Heart left ventricle (tissue), 16 donors: ENCODE measurements at regions of chr6 and their contacts with region 1.

Region 1: DNA sequence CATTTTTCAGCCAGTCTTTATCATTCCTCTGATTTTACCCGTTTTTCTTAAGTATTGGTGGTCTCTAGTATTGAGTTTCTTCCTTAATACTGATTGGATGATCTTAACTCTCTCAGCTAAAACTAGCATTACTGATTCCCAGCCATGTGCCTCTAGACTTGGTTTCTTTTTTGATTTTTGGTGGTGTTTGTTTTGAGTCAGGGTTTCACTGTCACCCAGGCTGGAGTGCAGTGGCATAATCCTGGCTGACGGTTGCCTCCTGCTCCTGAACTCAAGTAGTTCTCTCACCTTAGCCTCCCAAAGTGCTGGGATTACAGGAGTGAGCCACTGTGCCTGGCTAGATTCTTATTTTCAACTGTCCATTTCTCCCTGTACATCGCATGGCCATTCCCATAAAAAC is 24.9 kb downstream of the DPPA5 start:
- DNase-seq: no peak
- ATAC-seq: no peak
- H3K4me3 ChIP-seq: no peak overlapping the region
- H3K27ac ChIP-seq: no peak overlapping the region
- H3K4me1 ChIP-seq: no peaks in the 10 kb centered on the region
- H3K27me3 ChIP-seq: peaks cover 0 to 22% (median 0%) of the 10 kb centered on the region in 9 donors
- CTCF ChIP-seq: no peak
- POLR2A ChIP-seq: no peak

Region 2: DNA sequence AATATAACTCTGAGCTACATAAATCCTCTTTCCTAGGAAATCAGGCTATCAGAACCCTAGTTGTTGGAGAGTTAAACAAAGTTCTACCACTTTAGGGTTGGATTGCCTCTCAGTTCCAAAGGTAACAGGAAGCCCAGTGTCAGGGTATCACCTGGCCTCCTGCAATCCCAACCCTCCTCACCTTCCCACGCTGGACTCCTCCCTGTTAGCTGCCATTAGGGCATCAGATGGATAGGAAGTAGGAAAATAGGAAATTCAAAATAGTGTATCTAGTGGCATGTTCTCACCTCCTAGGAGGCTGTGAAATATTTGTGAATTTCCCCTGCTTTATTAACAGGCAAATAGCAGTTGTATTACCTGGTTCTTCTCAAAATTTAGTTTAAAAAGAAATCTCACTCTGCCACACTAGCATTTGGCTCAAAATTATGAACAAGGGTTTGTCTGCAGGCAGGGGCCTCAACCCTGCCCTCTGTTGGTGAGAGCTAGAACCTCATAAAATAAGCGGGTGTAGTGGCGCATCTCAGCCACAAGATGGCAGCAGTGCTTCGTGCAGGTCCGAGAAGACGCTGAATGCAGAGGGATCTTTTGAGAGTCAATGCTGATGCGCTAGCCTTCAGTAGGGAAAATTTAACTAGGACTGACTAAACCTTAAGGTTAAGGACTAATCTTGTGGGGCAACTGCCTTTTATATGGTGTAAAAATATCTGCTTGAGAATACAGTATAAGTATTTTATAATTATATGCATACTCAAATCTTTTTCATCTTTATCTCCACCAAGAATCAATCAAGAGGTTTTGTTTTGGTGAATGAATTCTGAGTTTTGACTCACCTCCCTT is 917.1 kb before region 1 on chr6:
- intact Hi-C with region 1: loop called in 4 of 10 experiments (anchors 5 to 10 kb)
- DNase-seq: peak; percentile 37 to 73 (median 59)
- ATAC-seq: peak in 3 of 4 donors; percentile 68 to 87 (median 80)
- H3K4me3 ChIP-seq: no peak overlapping the region
- H3K27ac ChIP-seq: no peak overlapping the region
- H3K4me1 ChIP-seq: no peaks in the 10 kb centered on the region
- H3K27me3 ChIP-seq: peaks cover 0 to 21% (median 6%) of the 10 kb centered on the region in 9 donors
- CTCF ChIP-seq: peak; percentile 100
- POLR2A ChIP-seq: no peak

Region 3: DNA sequence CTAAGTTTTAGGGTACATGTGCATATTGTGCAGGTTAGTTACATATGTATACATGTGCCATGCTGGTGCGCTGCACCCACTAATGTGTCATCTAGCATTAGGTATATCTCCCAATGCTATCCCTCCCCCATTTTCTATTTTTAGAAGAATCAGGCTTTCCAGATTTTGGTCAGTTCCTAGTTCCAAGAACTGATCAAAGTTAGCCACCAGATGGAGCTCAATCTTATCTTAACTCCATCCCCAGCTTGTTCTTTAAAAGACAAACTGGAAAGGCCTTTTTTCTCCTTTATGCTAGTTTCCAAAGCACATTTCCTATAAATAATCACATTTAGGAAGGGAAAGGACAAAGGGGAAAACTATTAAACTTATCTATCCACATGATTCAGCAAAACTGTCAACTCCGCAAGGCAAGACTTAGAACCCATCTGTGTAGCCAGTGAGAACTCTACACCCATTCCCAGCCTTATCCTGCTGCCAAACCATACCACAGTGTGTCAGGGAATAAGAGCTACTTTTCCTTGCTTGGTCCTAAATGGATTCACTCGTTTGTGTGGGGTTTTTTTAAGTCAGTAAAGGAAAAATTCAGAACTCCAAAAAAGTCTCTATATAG is 43.4 kb before region 1 on chr6:
- intact Hi-C with region 1: loop called in 6 of 10 experiments (anchors 2 to 5 kb)
- DNase-seq: no peak
- ATAC-seq: no peak
- H3K4me3 ChIP-seq: no peak overlapping the region
- H3K27ac ChIP-seq: no peak overlapping the region
- H3K4me1 ChIP-seq: no peaks in the 10 kb centered on the region
- H3K27me3 ChIP-seq: no peaks in the 10 kb centered on the region
- CTCF ChIP-seq: peak in 10 of 12 donors; percentile 13 to 54 (median 27)
- POLR2A ChIP-seq: no peak